ENCODE measurements at regions of chr7 and their contacts with region 1.

Region 1: DNA sequence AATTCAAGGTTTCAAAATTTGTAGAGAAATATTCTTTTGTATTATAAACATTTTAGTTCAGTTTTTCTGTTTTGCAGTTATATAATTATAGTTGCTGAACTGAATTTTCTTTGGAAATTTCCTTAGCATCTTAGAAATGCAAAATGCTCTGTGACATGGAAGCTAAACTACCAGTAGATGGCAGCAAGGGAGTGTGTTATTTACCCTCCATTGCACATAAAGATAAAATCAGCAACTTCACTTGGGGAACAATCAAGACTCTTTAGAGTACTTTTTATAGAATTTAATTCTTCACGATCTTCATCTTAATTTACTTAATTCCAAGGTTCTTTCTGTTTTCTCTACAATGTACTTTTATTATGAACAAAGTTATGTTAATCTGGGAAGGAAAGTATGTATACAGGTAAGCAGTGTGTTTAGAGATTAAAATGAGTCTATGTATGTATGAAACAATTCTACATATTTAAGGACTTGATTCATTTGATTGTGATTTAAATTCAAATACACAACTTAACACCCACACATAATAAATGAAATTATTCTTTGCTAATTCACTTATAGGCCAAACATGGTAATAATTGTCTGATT is 404.2 kb downstream of the THSD7A start:
- ATAC-seq: peak in 4 of 8 experiments; percentile 40 to 68 (median 56)
- H3K4me3 ChIP-seq: no peak overlapping the region
- H3K27ac ChIP-seq: no peak overlapping the region
- H3K4me1 ChIP-seq: no peaks in the 10 kb centered on the region

Region 2: GRCh38 chr7:11524476-11525397 is 97.0 kb after region 1 on chr7:
- in situ Hi-C with region 1: no loop called
- ATAC-seq: peak in 3 of 8 experiments; percentile 52 to 66 (median 66)
- H3K4me3 ChIP-seq: no peak overlapping the region
- H3K27ac ChIP-seq: no peak overlapping the region
- H3K4me1 ChIP-seq: peaks cover 0 to 17% of the 10 kb centered on the region in 2 donors

Region 3: GRCh38 chr7:11817111-11817740 is 389.4 kb after region 1 on chr7:
- in situ Hi-C with region 1: loop called in 1 of 9 experiments (anchors 25 kb)
- ATAC-seq: peak in 1 of 8 experiments; percentile 24
- H3K4me3 ChIP-seq: no peak overlapping the region
- H3K27ac ChIP-seq: no peak overlapping the region
- H3K4me1 ChIP-seq: peaks cover 0 to 6% of the 10 kb centered on the region in 2 donors

Region 4: DNA sequence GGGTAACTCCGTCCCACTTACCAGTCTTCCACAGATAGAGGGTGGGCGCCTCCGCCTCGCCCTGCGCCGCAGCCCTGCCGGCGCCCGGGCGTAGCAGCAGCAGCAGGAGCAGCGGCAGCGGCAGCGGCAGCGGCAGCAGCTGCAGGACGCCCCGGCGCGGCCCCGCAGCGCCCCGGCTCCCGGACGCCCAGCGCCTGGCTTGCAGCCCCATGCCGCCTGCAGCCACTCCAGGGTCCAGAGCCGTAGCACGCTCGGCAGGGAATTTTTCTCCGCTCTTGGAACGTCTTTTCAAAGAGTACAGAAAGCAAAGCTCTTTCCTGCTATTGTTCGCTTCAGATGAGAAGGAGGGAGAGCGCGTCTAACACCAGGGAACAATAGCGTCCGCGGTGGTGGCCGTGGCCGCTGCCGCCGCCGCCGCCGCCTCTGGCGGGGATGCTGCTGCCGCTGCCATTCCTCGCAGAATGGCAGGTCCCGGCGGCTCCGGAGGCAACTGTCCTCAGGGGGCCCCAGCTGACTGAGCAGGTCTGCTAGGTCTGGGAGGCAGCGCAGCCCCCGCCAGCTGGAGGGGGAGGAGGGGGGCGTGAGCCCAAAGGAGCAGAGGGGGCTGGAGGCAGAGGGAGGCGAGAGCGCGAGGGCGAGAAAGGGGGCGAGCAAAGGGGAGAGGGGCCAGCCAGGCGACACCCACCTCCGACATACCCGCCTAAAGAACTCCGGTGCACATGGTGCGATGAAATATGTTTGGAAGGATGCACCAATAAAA is 404.1 kb after region 1 on chr7 and contains the start of gene THSD7A:
- in situ Hi-C with region 1: loop called in 1 of 9 experiments (anchors 25 kb)
- ATAC-seq: peak; percentile 84 to 97 (median 87)
- H3K4me3 ChIP-seq: peak within 1 kb of the TSS; percentile 45 to 70 (median 47)
- H3K27ac ChIP-seq: peak within 1 kb of the TSS; percentile 75 to 85
- H3K4me1 ChIP-seq: peaks cover 8 to 36% of the 10 kb centered on the region in 2 donors
- total RNA-seq, gene THSD7A: 1.1 to 24.7 (median 9.6) TPM

Region 5: DNA sequence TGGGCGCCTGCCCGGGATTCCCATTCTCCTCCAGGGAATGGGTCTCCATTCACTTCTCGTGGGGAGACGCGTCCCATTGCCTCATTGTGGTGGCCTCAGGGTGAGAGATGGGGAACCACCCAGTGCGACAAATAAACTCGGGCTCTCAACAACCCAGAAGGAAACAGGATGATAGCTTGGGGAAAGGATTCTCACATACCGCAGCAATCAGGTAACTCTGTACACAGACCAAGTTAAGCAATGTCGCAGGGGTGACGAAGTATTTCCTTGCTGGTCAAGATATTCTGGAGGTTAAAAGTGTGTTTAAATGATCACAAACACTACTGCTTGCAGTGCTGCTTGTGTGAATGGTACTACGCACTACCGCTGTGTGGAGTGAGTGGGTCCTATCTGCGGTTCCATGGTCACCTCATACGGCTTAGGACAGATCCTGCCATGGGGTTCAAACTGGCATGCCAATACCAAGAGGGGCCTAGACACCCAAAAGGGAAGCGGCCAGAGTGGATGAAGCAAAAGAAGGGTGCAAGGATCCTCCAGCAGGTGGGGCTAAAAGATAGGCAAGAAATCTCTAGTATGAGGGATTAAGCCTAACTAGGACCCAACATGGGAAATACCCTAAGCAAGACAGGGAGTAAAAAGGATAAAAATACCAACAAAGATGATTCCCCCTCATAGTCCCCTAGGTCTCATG is 639.5 kb after region 1 on chr7:
- in situ Hi-C with region 1: loop called in 1 of 9 experiments (anchors 25 kb)
- ATAC-seq: peak in 5 of 8 experiments; percentile 46 to 92 (median 76)
- H3K4me3 ChIP-seq: no peak overlapping the region
- H3K27ac ChIP-seq: no peak overlapping the region
- H3K4me1 ChIP-seq: no peaks in the 10 kb centered on the region

Region 6: GRCh38 chr7:12322284-12322902 is 894.6 kb after region 1 on chr7:
- in situ Hi-C with region 1: loop called in 6 of 9 experiments (anchors 25 kb)
- ATAC-seq: no peak
- H3K4me3 ChIP-seq: no peak overlapping the region
- H3K27ac ChIP-seq: no peak overlapping the region
- H3K4me1 ChIP-seq: peaks cover 4 to 14% of the 10 kb centered on the region in 2 donors

Region 7: DNA sequence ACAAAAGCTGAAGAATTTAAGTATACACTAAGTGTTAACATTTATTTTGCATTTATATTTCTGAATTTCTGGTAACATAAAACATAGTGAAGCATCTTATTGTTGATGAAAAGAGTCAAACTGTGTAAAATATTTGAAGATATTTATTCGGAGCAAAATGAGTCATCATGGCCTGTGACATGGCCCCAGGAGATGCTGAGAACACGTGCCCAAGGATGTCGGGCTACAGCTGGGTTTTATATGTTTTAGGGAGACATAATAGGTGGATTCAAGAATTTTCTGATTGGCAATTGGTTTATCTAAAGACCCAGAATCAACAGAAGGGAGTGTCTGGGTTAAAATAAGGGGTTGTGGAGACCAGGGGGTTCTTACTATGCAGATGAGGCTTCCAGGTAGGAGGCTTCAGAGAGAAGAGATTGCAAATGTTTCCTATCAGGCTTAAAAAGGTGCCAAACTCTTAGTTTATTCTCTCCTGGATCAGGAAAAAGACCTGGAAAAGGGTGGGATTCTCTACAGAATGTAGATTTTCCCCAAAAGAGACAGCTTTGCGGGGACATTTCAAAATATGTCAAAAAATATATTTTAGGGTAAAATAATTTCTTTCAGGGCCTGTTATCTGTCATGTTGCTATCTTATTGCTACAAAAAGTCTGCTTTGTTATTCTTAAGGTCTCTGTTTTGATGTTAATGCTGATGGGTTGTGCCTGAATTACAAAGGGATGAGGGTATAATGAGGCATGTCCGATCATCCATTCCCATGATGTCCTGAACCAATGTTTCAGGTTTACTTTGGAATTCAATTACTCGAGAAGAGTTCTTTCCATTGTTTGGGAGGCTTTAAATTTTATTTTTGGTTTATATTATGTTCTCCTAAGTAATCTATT is 901.3 kb after region 1 on chr7:
- in situ Hi-C with region 1: loop called in 6 of 9 experiments (anchors 25 kb)
- ATAC-seq: no peak
- H3K4me3 ChIP-seq: no peak overlapping the region
- H3K27ac ChIP-seq: no peak overlapping the region
- H3K4me1 ChIP-seq: peaks cover 0 to 3% of the 10 kb centered on the region in 2 donors

Region 8: DNA sequence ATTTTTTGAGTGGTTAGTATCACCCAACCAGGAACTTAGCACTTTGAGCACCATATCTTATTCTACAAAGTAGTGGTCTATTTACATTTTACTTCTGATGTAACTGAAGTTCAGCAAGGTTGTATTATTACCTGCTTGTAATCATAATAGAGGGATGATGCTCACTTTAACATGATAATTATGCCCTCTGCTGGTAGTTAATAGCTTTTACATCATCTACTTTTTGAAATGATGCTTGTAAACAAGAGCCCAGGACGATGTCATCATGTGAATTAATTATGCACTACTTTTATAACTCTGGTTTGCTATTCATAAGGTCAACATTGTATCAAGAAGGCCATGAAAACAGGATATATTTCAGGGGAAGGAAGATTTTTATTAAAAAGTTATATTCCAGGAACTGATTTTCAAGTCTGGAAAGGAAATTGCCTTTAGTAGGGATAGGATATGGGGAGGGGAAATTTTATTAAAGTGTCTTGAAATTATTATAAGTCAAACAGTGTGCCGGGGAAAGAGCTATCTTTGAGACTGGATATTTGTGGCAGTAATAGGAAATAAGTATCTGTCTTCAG is 1062.4 kb after region 1 on chr7:
- in situ Hi-C with region 1: loop called in 2 of 9 experiments (anchors 25 kb)
- ATAC-seq: peak in 5 of 8 experiments; percentile 24 to 69 (median 52)
- H3K4me3 ChIP-seq: no peak overlapping the region
- H3K27ac ChIP-seq: no peak overlapping the region
- H3K4me1 ChIP-seq: peaks cover 0 to 3% of the 10 kb centered on the region in 2 donors